PC-3 (cell line): ENCODE measurements at regions of chr3 and their contacts with region 1.

Region 1: GRCh38 chr3:170307671-170308403 is 49.7 kb upstream of the SKIL start:
- DNase-seq: peak; percentile 92
- ATAC-seq: peak; percentile 80
- H3K4me3 ChIP-seq: no peak overlapping the region
- H3K27ac ChIP-seq: peak overlapping the region; percentile 10; the same call in 1 of the 2 replicates
- H3K4me1 ChIP-seq: peaks cover 12% of the 10 kb centered on the region
- H3K27me3 ChIP-seq: no peaks in the 10 kb centered on the region
- CTCF ChIP-seq: no peak

Region 2: GRCh38 chr3:169060042-169060441 is 1247.8 kb before region 1 on chr3:
- CTCF ChIA-PET with region 1: interaction called, 12 read pairs
- POLR2A ChIA-PET with region 1: no interaction called
- intact Hi-C with region 1: no loop called
- DNase-seq: peak; percentile 19
- ATAC-seq: peak; percentile 56
- H3K4me3 ChIP-seq: no peak overlapping the region
- H3K27ac ChIP-seq: no peak overlapping the region
- H3K4me1 ChIP-seq: peaks cover 11% of the 10 kb centered on the region; the same call in 1 of the 2 replicates
- H3K27me3 ChIP-seq: no peaks in the 10 kb centered on the region
- CTCF ChIP-seq: peak; percentile 44

Region 3: DNA sequence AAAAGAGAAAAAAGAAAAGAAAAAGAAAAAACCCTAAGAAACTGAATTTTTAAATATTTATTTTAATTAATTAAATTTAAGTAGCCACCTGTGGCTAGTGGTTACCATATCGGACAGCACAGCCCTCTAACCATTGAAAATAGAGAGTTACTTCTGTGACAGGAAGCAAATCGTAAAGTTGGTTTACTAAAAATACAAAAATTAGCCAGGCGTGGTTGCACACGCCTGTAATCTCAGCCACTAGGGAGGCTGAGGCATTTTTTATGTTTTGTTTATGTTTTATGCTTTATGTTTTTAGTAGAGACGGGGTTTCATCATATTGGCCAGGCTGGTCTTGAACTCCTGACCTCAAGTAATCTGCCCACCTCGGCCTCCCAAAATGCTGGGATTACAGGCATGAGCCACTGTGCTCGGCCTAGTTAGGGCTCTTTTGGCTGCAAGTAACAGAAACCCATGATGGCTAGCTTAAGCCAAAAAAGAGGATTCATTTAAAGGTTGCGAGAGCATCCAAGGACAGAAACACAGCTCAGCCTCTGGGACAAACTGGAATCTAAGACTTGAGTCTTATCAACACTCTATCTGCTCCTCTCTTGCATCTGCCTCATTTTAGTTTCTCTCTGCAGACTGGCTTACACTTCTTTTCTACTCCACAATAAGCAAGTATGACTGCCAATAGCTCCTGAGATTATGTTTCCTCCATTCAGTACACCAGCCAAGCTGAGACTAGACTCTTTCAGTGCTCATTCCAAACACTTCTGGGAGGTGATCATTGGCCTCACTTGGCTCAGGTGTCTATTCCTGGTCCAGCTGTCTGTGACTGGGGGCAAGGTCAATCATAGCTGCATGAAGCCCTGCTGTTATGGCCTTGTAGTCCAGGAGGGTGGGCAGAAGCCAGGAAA is 42.9 kb after region 1 on chr3:
- CTCF ChIA-PET with region 1: no interaction called
- POLR2A ChIA-PET with region 1: no interaction called
- intact Hi-C with region 1: no loop called
- DNase-seq: no peak
- ATAC-seq: no peak
- H3K4me3 ChIP-seq: no peak overlapping the region
- H3K27ac ChIP-seq: no peak overlapping the region
- H3K4me1 ChIP-seq: peaks cover 4% of the 10 kb centered on the region
- H3K27me3 ChIP-seq: no peaks in the 10 kb centered on the region
- CTCF ChIP-seq: no peak

Region 4: GRCh38 chr3:170368921-170369320 is 61.1 kb after region 1 on chr3:
- CTCF ChIA-PET with region 1: interaction called, 5 read pairs
- POLR2A ChIA-PET with region 1: interaction called, 5 read pairs
- intact Hi-C with region 1: loop called (anchors 1 kb)
- DNase-seq: peak; percentile 30
- ATAC-seq: no peak
- H3K4me3 ChIP-seq: no peak overlapping the region
- H3K27ac ChIP-seq: no peak overlapping the region
- H3K4me1 ChIP-seq: peaks cover 12% of the 10 kb centered on the region
- H3K27me3 ChIP-seq: no peaks in the 10 kb centered on the region
- CTCF ChIP-seq: no peak; the same call in 1 of the 2 replicates